ENCODE measurements at regions of chr3 and their contacts with region 1.

Region 1: GRCh38 chr3:14508961-14509795 is 31.0 kb downstream of the GRIP2 start:
- DNase-seq: peak; percentile 28 to 81 (median 64)
- H3K4me3 ChIP-seq: no peak overlapping the region
- H3K27ac ChIP-seq: no peak overlapping the region
- H3K4me1 ChIP-seq: no peaks in the 10 kb centered on the region
- H3K27me3 ChIP-seq: peaks cover 6% of the 10 kb centered on the region
- CTCF ChIP-seq: peak; percentile 62 to 96 (median 78)
- POLR2A ChIP-seq: no peak

Region 2: DNA sequence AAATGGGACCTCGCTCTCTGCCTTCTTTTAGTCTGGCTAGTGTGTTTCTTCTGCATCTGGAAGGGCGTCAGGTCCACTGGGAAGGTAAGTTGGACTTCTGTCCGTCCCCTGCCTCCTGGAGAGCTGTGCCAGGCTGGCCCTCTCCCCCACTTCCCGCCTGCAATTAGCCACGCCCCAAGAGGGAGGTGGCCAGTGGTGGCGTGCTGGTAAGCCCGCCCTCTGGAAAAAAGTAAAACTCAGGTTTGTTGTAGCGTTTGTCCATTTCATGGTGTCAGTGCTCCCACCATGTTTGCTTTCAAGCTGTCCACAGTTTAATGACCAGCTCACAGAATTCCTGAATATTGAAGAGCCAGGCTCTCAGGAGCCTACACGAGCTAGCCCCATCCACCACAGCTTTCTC is 51.2 kb before region 1 on chr3:
- intact Hi-C with region 1: no loop called
- DNase-seq: no peak
- H3K4me3 ChIP-seq: no peak overlapping the region
- H3K27ac ChIP-seq: no peak overlapping the region
- H3K4me1 ChIP-seq: peaks cover 27 to 30% of the 10 kb centered on the region in 2 donors
- H3K27me3 ChIP-seq: no peaks in the 10 kb centered on the region
- CTCF ChIP-seq: no peak
- POLR2A ChIP-seq: no peak

Region 3: GRCh38 chr3:14467814-14468620 is 41.2 kb before region 1 on chr3:
- intact Hi-C with region 1: no loop called
- DNase-seq: peak in 3 of 7 donors; percentile 42 to 56 (median 55)
- H3K4me3 ChIP-seq: no peak overlapping the region
- H3K27ac ChIP-seq: peak overlapping the region in 1 of 5 donors; percentile 12
- H3K4me1 ChIP-seq: peaks cover 7 to 17% of the 10 kb centered on the region in 2 donors
- H3K27me3 ChIP-seq: no peaks in the 10 kb centered on the region
- CTCF ChIP-seq: peak; percentile 81 to 94 (median 88)
- POLR2A ChIP-seq: no peak

Region 4: DNA sequence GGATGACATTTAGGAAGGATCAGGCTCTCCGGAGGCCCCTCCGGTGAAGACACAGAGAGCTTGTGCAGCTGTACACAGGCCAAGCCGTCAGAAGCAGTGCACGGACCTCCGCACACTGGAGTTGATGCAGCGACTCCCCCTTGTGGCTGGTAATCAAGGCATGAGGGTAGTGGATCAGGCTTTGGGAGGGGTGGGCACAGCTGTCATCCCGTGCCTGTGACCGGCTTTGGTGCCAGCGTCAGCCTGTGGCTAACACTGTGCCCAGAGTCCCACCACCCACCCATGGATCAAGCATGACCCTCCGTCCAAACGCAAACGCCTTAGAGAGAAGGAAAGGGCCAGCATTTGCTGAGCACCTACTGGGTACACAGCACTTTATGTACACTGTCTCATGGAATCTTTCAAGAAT is 39.1 kb after region 1 on chr3:
- intact Hi-C with region 1: loop called in 1 of 2 experiments (anchors 5 kb)
- DNase-seq: peak; percentile 55 to 83 (median 79)
- H3K4me3 ChIP-seq: no peak overlapping the region
- H3K27ac ChIP-seq: no peak overlapping the region
- H3K4me1 ChIP-seq: no peaks in the 10 kb centered on the region
- H3K27me3 ChIP-seq: no peaks in the 10 kb centered on the region
- CTCF ChIP-seq: peak; percentile 53 to 78 (median 66)
- POLR2A ChIP-seq: no peak

Measured in adrenal gland (tissue), 19 donors.